Natural killer cell (primary cell): ENCODE measurements at regions of chr1 and their contacts with region 1.

Region 1: GRCh38 chr1:23825076-23825761 is at the start of gene HMGCL:
- DNase-seq: peak; percentile 83 to 93
- ATAC-seq: peak; percentile 98 to 99 (median 98)
- H3K4me3 ChIP-seq: peak within 1 kb of the TSS; percentile 95
- H3K4me3 Mint-ChIP-seq: peak within 1 kb of the TSS; percentile 96
- H3K27ac ChIP-seq: peak within 1 kb of the TSS; percentile 91
- H3K27ac Mint-ChIP-seq: peak within 1 kb of the TSS; percentile 91 to 96
- H3K4me1 ChIP-seq: peaks cover 13% of the 10 kb centered on the region
- H3K4me1 Mint-ChIP-seq: peaks cover 21 to 23% of the 10 kb centered on the region in 2 donors
- H3K27me3 ChIP-seq: no peaks in the 10 kb centered on the region
- H3K27me3 Mint-ChIP-seq: no peaks in the 10 kb centered on the region
- CTCF ChIP-seq: no peak
- total RNA-seq, gene HMGCL: 16.8 to 26.9 (median 17.0) TPM

Region 2: GRCh38 chr1:23800400-23801337 is 24.6 kb before region 1 on chr1 and contains the start of gene GALE:
- intact Hi-C with region 1: loop called (anchors 1 kb)
- DNase-seq: peak; percentile 93 to 98
- ATAC-seq: peak; percentile 92 to 98 (median 93)
- H3K4me3 ChIP-seq: peak within 1 kb of the TSS; percentile 93
- H3K4me3 Mint-ChIP-seq: peak within 1 kb of the TSS; percentile 94
- H3K27ac ChIP-seq: peak within 1 kb of the TSS; percentile 88
- H3K27ac Mint-ChIP-seq: peak within 1 kb of the TSS; percentile 85 to 92
- H3K4me1 ChIP-seq: peaks cover 30% of the 10 kb centered on the region
- H3K4me1 Mint-ChIP-seq: peaks cover 16 to 29% of the 10 kb centered on the region in 2 donors
- H3K27me3 ChIP-seq: no peaks in the 10 kb centered on the region
- H3K27me3 Mint-ChIP-seq: no peaks in the 10 kb centered on the region
- CTCF ChIP-seq: no peak
- total RNA-seq, gene GALE: 12.8 to 20.3 (median 14.6) TPM

Region 3: DNA sequence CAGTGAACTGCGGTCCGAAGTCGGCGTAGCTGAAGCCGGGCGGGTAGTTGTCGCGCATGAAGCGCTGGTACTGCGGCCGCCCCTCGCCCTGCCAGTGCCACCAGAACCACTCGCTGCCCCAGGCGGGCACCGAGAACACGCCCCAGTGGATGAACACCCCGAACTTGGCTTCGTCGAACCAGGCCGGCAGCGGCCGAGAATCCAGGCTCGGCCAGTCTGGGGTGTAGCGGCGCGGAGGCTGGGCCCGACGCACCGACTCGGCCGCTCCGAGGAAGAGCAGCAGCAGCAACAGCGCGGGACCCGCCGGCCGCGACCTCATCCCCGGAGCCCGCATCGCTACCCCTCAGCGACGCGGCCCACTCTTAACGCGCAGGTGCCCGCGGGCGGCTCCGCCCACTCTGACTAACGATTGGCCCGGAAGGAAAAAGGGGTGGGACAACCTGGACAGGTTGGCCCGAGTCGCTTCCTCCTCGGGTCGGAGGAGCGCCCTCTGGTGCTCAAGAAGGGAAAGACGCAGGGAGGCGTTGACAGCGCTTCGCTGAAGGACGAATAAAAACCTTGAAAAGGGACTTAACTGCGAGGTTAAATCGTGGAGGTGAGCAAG is 42.8 kb after region 1 on chr1 and contains the start of gene FUCA1:
- intact Hi-C with region 1: no loop called
- DNase-seq: peak; percentile 94 to 99
- ATAC-seq: peak; percentile 99 to 100 (median 99)
- H3K4me3 ChIP-seq: peak within 1 kb of the TSS; percentile 78
- H3K4me3 Mint-ChIP-seq: peak within 1 kb of the TSS; percentile 92
- H3K27ac ChIP-seq: peak within 1 kb of the TSS; percentile 61
- H3K27ac Mint-ChIP-seq: peak within 1 kb of the TSS; percentile 80 to 87
- H3K4me1 ChIP-seq: peaks cover 29% of the 10 kb centered on the region
- H3K4me1 Mint-ChIP-seq: peaks cover 23 to 30% of the 10 kb centered on the region in 2 donors
- H3K27me3 ChIP-seq: no peaks in the 10 kb centered on the region
- H3K27me3 Mint-ChIP-seq: peaks cover 4 to 7% of the 10 kb centered on the region in 2 donors
- CTCF ChIP-seq: peak; percentile 90
- total RNA-seq, gene FUCA1: 6.8 to 12.5 (median 11.9) TPM

Region 4: DNA sequence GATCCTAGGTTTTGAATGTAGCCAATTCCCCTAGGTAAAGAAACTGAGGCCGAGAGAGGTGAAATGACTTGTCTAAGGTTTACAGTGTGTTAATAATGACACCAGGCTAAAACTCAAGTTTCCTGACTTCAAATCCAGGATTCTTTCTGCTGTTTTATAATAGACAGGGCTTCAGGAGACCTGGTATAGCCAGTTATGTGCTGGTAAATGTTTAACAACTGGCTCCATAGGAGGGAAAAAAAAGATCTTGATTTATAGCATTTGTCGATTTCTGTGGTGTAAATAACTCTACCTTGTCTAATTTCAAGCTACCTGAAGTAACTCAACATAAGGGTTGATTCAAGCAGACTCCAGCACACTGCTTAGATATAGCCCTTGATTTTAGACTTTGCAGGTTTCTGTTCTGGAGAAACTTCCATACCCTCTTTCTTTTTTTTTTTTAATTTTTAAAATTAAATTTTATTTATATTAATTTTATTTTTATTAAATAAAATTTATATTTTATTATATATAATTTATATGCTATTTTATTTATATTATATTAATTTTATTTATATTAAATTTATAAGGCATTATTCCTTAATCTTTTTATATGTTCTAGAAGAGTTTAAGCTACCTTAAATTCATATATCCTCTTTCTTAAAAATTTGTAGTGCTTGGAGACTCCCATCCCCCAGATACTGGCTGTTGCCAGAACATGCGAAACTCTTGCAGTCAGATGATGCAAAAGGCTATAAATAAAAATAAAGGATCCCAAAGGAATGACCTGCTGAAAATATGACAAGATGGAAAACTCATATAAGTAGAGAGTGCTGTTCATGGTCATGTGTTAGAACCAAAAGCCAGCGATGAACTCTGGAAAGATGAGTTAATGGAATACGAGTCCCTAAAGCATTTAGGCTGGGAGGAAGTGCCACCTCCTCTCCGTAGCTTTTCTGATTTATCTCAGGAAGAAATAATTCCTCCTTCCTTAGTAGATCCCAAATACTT is 190.3 kb after region 1 on chr1:
- intact Hi-C with region 1: no loop called
- DNase-seq: no peak
- ATAC-seq: no peak
- H3K4me3 ChIP-seq: no peak overlapping the region
- H3K4me3 Mint-ChIP-seq: no peak overlapping the region
- H3K27ac ChIP-seq: no peak overlapping the region
- H3K27ac Mint-ChIP-seq: no peak overlapping the region
- H3K4me1 ChIP-seq: no peaks in the 10 kb centered on the region
- H3K4me1 Mint-ChIP-seq: peaks cover 0 to 5% of the 10 kb centered on the region in 2 donors
- H3K27me3 ChIP-seq: no peaks in the 10 kb centered on the region
- H3K27me3 Mint-ChIP-seq: peaks cover 2 to 11% of the 10 kb centered on the region in 2 donors
- CTCF ChIP-seq: no peak